PC-9 (cell line): ENCODE measurements at regions of chr11 and their contacts with region 1.

Region 1: DNA sequence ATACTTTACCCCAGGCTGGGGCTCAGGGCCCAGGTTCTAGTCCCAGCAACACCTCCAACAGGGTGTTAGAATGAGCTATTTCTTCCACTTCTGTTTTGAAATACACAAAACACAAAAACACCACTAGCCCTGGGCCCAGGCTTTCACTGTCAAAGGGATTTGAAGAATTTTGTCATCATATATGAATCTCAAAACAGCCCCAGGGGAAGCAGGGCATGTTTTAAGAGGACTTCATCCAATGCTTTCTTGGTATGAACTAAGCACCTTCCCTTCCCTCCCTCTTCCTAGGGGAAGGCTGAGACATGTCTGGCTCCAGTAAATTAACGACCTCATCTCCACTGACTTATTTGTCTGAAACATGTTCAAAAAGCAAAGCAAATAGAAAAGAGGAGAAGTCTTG is 75.7 kb upstream of the INCENP start:
- DNase-seq: peak in 1 of 2 experiments; percentile 68
- H3K4me3 ChIP-seq: no peak overlapping the region
- H3K27ac ChIP-seq: peak overlapping the region; percentile 98
- H3K4me1 ChIP-seq: peaks cover 98% of the 10 kb centered on the region
- H3K27me3 ChIP-seq: no peaks in the 10 kb centered on the region
- CTCF ChIP-seq: no peak

Region 2: DNA sequence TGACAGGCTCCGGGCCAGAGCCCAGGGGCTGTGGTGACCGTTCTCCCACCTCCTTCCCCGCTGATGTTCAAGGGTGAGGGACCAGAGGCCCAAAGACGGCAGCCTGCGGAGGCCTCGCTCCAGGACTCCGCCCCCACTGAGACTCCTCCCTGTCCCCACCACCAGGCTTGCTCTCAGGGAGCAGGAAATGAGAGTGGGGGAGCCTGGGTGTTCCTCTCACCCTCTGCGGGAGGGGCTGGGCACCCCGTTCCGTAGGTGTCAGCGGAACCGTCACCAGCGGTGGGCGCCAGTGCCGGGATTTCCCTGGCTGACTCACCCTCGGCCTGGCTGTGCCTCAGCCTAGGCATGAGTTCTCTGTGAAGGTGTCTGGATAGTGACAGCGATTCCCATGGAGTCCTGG is 352.1 kb before region 1 on chr11:
- CTCF ChIA-PET with region 1: no interaction called
- POLR2A ChIA-PET with region 1: no interaction called
- intact Hi-C with region 1: loop called (anchors 10 kb)
- DNase-seq: peak; percentile 91 to 94
- H3K4me3 ChIP-seq: peak overlapping the region; percentile 34; the same call in 1 of the 2 replicates
- H3K27ac ChIP-seq: peak overlapping the region; percentile 96
- H3K4me1 ChIP-seq: peaks cover 73% of the 10 kb centered on the region
- H3K27me3 ChIP-seq: no peaks in the 10 kb centered on the region
- CTCF ChIP-seq: no peak

Region 3: GRCh38 chr11:61972672-61973475 is 75.2 kb before region 1 on chr11:
- CTCF ChIA-PET with region 1: interaction called, 8 read pairs
- POLR2A ChIA-PET with region 1: interaction called, 13 read pairs
- intact Hi-C with region 1: loop called (anchors 1 kb)
- DNase-seq: peak; percentile 48 to 97
- H3K4me3 ChIP-seq: peak overlapping the region; percentile 44
- H3K27ac ChIP-seq: peak overlapping the region; percentile 99
- H3K4me1 ChIP-seq: peaks cover 91% of the 10 kb centered on the region
- H3K27me3 ChIP-seq: no peaks in the 10 kb centered on the region
- CTCF ChIP-seq: no peak

Region 4: DNA sequence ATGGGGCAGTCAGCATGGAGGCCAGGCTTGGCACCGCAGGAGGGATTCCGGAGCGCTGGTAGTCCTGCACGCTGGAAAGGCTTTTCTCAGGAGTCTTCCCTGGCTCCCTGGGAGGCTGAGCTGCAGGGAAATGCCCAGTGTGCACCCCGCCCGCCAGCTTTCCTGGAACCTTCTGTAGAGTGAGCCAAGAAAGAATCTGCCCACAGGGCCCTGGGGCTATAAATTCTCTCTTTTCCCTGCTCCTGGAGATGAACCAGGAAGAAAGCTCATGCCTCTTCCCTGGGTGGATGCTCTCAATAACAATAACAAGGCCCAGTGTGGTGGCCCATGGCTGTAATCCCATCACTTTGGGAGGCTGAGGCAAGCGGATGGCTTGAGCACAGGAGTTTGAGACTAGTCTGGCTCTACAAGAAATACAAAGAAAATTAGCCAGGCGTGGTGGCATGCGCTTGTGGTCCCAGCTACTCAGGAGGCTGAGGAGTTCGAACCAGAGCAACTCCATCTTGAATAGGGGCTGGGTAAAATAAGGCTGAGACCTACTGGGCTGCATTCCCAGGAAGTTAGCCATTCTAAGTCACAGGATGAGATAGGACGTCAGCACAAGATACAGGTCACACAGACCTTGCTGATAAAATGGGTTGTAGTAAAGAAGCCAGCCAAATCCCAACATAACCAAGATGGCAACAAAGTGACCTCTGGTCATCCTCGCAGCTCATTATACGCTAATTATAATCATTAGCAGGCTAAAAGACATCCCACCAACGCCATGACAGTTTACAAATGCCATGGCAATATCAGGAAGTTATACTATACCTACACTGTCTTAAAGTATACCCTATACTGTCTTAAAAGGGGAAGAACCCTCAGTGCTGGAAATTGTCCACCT is 34.2 kb before region 1 on chr11:
- CTCF ChIA-PET with region 1: interaction called, 8 read pairs
- POLR2A ChIA-PET with region 1: interaction called, 12 read pairs
- intact Hi-C with region 1: loop called (anchors 2 kb)
- DNase-seq: peak; percentile 80 to 83
- H3K4me3 ChIP-seq: peak overlapping the region; percentile 33; the same call in 1 of the 2 replicates
- H3K27ac ChIP-seq: peak overlapping the region; percentile 72
- H3K4me1 ChIP-seq: peaks cover 46% of the 10 kb centered on the region
- H3K27me3 ChIP-seq: no peaks in the 10 kb centered on the region
- CTCF ChIP-seq: no peak

Region 5: DNA sequence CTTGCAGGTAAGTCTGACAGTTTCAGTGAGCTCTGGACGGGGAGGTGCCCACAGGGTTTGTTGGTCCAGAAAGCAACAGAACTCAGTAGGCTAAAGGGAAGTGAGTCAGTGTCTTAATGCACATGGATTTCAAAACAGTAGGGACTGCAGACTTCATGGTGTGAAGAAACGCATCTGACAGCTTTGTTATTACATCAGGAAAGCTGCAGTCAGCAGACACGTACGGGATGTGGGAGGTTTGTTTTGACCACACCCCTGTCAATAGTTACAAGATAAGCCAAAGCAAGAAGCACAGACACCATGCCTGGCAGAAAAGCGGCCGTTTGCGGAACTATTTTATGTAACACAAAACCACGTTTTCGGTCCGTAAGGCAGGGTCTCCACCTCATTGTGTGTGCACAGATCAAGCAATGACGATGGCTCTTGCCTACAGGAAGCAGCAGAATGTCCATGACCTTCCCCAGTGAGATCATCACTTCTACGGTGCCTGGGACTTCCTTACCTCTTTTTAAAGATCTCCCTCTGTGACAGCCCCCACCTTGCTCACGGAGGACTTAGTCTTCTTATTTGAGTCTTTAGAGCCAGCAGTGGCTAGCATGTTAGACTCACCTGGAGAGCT is 22.5 kb before region 1 on chr11:
- CTCF ChIA-PET with region 1: no interaction called
- POLR2A ChIA-PET with region 1: no interaction called
- intact Hi-C with region 1: loop called (anchors 1 kb)
- DNase-seq: peak; percentile 73 to 100
- H3K4me3 ChIP-seq: peak overlapping the region; percentile 22; the same call in 1 of the 2 replicates
- H3K27ac ChIP-seq: peak overlapping the region; percentile 89
- H3K4me1 ChIP-seq: peaks cover 36% of the 10 kb centered on the region
- H3K27me3 ChIP-seq: no peaks in the 10 kb centered on the region
- CTCF ChIP-seq: no peak